HEK293 (cell line): ENCODE measurements at regions of chr19 and their contacts with region 1.

Region 1: GRCh38 chr19:45125926-45126493 is 33.0 kb downstream of the PPP1R37 start:
- H3K4me3 ChIP-seq: no peak overlapping the region
- H3K27ac ChIP-seq: no peak overlapping the region
- H3K4me1 ChIP-seq: peaks cover 13% of the 10 kb centered on the region
- CTCF ChIP-seq: peak; percentile 82

Region 2: GRCh38 chr19:45103156-45103507 is 22.9 kb before region 1 on chr19:
- CTCF ChIA-PET with region 1: interaction called, 24 read pairs
- POLR2A ChIA-PET with region 1: interaction called, 4 read pairs
- H3K4me3 ChIP-seq: no peak overlapping the region
- H3K27ac ChIP-seq: no peak overlapping the region
- H3K4me1 ChIP-seq: peaks cover 22% of the 10 kb centered on the region
- CTCF ChIP-seq: no peak

Region 3: DNA sequence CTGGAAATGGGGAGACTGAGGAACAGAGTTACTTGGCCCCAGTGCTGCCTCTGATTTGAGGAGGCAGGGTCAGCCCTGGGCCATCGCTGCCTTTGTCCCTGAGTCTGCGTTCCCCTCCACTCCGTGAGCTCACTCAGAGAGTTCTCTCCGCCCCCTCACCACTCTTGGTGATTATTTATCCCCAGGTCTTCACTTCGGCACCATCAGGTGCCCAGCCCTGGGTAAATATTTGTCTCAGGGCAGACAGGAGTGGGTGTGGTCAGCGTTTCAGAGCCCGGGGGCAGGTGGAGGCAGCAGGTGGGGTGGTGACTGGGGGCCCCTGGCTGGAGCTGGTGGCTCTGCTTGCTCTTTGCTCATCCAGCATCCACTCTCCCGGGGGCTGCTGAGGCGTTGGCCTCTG is 12.4 kb before region 1 on chr19:
- CTCF ChIA-PET with region 1: interaction called, 14 read pairs
- POLR2A ChIA-PET with region 1: no interaction called
- H3K4me3 ChIP-seq: no peak overlapping the region
- H3K27ac ChIP-seq: no peak overlapping the region
- H3K4me1 ChIP-seq: peaks cover 26% of the 10 kb centered on the region
- CTCF ChIP-seq: no peak

Region 4: DNA sequence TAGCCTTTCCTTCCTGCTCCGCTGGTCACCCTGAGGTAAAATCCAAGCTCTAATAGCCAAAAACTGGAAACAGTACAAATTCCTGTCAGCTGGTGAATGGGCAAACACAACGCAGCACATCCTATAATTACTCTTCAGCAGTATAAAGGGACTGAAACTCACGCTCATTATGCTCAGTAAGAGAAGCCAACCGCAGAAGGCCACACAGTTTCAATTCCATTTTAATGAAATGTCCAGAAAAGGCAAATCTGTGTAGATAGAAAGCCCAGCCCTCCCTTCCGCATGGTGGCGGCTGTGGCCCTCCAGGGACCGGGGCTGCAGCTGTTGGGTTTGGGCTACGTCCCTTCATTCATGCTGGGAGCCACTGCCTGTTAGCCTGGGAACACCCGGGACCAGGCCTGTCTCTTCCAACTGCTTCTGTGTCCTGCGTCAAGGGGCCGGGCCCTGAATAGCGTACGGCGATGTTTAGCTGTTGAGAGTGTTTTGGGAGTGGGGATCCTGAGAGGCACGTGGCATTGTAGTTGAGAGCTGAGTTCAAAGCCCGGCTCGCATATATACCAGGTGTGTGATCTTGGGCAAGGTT is 11.3 kb after region 1 on chr19:
- CTCF ChIA-PET with region 1: interaction called, 23 read pairs
- POLR2A ChIA-PET with region 1: no interaction called
- H3K4me3 ChIP-seq: no peak overlapping the region
- H3K27ac ChIP-seq: no peak overlapping the region
- H3K4me1 ChIP-seq: peaks cover 5% of the 10 kb centered on the region; the same call in 1 of the 2 replicates
- CTCF ChIP-seq: no peak